Ascending aorta (tissue), 2 donors: ENCODE measurements at regions of chr7 and their contacts with region 1.

Region 1: GRCh38 chr7:116671681-116672595 is at the start of gene MET:
- DNase-seq: peak; percentile 39 to 85
- H3K4me3 ChIP-seq: peak within 1 kb of the TSS; percentile 64 to 91
- H3K27ac ChIP-seq: peak within 1 kb of the TSS; percentile 62 to 79
- H3K4me1 ChIP-seq: peaks cover 0 to 3% of the 10 kb centered on the region in 2 donors
- H3K27me3 ChIP-seq: no peaks in the 10 kb centered on the region
- CTCF ChIP-seq: peak; percentile 54 to 60 (median 58)
- total RNA-seq, gene MET: 29.5 TPM

Region 2: DNA sequence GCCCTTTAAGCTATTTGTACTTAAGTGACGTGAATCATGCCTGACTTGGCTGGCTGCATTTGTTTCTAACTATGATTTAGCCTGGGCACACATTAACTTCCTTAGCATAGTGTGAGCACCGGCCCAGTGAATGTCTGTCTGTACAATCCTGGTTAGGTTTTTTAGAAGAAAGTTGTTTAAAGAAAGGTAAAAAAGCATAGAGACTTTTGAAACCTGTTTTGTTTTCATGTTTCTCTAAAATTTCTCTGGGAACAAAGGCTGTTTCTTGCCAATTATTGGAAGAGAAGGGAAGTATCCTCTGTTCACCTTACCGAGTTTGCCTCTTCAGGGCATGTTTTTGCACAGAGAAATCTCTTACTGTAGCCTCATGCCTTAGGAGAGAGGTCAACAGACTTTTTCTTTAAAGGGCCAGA is 42.9 kb before region 1 on chr7:
- intact Hi-C with region 1: loop called (anchors 1 kb)
- DNase-seq: peak in 1 of 2 donors; percentile 65
- H3K4me3 ChIP-seq: no peak overlapping the region
- H3K27ac ChIP-seq: peak overlapping the region; percentile 63 to 71
- H3K4me1 ChIP-seq: peaks cover 3 to 8% of the 10 kb centered on the region in 2 donors
- H3K27me3 ChIP-seq: no peaks in the 10 kb centered on the region
- CTCF ChIP-seq: no peak

Region 3: GRCh38 chr7:116752305-116753074 is 80.6 kb after region 1 on chr7:
- intact Hi-C with region 1: no loop called
- DNase-seq: no peak
- H3K4me3 ChIP-seq: no peak overlapping the region
- H3K27ac ChIP-seq: no peak overlapping the region
- H3K4me1 ChIP-seq: no peaks in the 10 kb centered on the region
- H3K27me3 ChIP-seq: no peaks in the 10 kb centered on the region
- CTCF ChIP-seq: no peak

Region 4: DNA sequence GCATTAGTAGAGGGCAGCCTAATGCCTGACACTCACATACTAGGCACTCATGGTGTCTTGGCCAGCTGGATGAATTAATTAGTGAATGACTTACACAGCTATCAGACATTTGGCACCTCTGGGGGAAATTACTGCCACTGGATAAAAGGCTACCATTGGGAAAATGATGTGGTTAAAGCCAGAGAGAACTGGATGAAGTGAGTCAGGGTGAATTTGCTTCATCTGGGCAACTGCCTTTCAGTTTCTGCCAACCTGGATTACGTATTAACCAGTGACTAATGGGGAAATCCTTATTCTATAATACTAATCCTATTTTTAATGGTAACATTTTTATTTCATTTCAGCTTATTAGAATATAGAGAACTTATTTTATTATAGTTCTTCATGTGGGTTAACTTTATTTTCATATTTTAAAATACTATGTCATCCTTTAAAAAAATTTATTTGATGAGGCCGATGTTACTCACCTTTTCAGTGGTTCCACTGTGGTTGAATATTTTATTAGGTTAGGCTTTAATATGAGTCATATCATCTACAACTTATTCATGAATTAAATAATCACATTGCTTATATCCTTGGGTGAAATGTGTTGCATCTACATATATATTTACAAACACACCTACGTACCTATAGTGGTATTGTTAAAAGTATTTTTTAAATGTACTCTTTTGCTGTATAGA is 104.8 kb after region 1 on chr7:
- intact Hi-C with region 1: loop called (anchors 2 kb)
- DNase-seq: no peak
- H3K4me3 ChIP-seq: no peak overlapping the region
- H3K27ac ChIP-seq: peak overlapping the region; percentile 31 to 41
- H3K4me1 ChIP-seq: peaks cover 0 to 32% of the 10 kb centered on the region in 2 donors
- H3K27me3 ChIP-seq: no peaks in the 10 kb centered on the region
- CTCF ChIP-seq: no peak

Region 5: DNA sequence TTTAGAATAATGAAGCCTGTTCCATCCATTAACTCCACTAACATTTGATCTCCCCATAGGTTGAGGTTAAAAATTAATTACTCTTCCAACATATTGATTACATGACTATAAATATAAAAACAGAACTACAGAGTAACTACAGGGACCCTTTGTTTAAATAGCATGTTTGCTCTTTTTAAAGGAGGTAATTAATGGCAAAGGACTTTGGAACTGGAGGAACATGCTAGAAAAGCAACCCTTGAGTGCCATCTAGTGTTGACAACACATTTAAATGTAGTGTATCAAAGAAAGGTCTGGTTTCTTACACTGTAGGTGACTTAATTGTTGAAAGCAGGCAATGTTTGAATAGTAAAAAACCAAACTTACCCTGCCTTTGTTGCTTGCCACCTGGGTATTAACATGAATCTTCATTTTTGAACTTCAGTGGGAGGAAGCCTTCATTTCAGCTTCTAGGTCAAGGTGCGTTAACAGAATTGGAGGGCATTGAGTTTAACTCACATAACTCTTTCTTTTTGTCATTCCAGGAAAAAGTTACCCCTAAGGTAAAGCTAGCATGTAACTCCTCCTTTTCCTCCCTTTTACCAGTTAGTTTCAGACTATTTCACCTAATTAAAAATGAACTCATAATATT is 137.8 kb after region 1 on chr7:
- intact Hi-C with region 1: loop called (anchors 2 kb)
- DNase-seq: no peak
- H3K4me3 ChIP-seq: no peak overlapping the region
- H3K27ac ChIP-seq: peak overlapping the region in 1 of 2 donors; percentile 3
- H3K4me1 ChIP-seq: peaks cover 0 to 5% of the 10 kb centered on the region in 2 donors
- H3K27me3 ChIP-seq: no peaks in the 10 kb centered on the region
- CTCF ChIP-seq: peak; percentile 65 to 77 (median 65)